CD14-positive monocyte (primary cell): ENCODE measurements at regions of chr11 and their contacts with region 1.

Region 1: DNA sequence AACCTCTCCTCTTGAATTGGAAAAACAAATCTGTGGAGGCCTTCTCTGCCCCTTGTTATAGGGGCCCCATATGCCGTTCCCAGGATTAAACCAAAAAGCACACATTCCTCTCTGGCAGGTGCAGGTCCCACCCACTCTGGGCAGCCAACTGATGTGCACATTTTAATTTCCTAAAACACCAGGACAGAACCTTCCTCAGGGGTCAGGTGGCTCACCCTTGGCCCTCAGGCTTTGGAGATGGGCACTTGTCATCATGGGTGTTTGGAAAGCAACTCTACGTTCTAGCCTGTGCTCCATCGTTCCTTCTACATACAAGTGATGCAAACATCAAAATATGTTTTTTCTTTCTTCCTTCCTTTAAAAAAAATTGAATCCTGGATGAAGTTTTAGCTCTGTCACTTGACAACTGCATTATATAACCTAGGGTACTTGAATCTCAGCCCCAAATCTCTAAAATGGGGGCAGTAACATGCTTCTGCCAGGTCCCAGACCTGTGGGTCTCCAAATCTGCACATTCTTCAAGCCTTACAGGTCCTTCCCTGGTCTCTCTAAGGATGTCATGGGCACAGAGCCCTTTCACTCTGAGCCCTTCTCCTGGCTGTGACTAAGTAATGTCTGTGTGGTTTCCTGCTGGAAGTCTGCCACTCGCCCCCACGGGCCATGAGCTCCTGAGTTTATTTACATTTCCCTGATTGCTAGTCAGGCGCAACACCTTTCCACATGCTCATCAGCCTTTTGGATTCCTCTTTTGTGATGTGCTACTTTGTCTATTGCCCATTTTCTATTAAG is 43.8 kb downstream of the KCNQ1OT1 start:
- DNase-seq: no peak
- H3K4me3 ChIP-seq: no peak overlapping the region
- H3K4me3 Mint-ChIP-seq: no peak overlapping the region
- H3K27ac ChIP-seq: no peak overlapping the region
- H3K27ac Mint-ChIP-seq: no peak overlapping the region
- H3K4me1 ChIP-seq: peaks cover 0 to 6% of the 10 kb centered on the region in 2 donors
- H3K4me1 Mint-ChIP-seq: peaks cover 10% of the 10 kb centered on the region
- H3K27me3 ChIP-seq: no peaks in the 10 kb centered on the region
- H3K27me3 Mint-ChIP-seq: peaks cover 2 to 3% (median 3%) of the 10 kb centered on the region in 3 donors
- CTCF ChIP-seq: no peak

Region 2: DNA sequence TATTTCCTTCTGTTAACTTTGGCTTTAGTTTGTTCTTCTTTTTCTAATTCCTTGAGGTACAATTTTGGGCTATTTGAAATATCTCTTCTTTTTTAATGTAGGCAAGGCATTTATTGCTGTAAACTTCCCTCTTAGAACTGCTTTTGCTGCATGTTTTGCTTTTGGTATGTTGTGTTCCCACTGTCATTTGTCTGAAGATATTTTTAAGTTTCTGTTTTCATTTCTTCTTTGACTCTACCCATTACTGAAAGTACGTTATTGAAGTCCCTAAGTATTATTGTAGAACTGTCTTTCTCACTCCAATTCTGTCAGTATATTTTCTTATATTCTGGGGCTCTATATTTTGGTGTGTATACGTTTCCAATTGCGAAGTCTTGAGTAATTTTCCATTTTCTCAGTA is 34.1 kb before region 1 on chr11:
- intact Hi-C with region 1: loop called in 1 of 2 experiments (anchors 5 kb)
- DNase-seq: no peak
- H3K4me3 ChIP-seq: no peak overlapping the region
- H3K4me3 Mint-ChIP-seq: no peak overlapping the region
- H3K27ac ChIP-seq: no peak overlapping the region
- H3K27ac Mint-ChIP-seq: no peak overlapping the region
- H3K4me1 ChIP-seq: no peaks in the 10 kb centered on the region
- H3K4me1 Mint-ChIP-seq: no peaks in the 10 kb centered on the region
- H3K27me3 ChIP-seq: no peaks in the 10 kb centered on the region
- H3K27me3 Mint-ChIP-seq: peaks cover 2 to 5% (median 3%) of the 10 kb centered on the region in 3 donors
- CTCF ChIP-seq: no peak